Head of caudate nucleus (tissue), 42 donors: ENCODE measurements at regions of chr2 and their contacts with region 1.

Region 1: GRCh38 chr2:64523666-64524603 is at the start of gene AFTPH:
- DNase-seq: peak; percentile 96 to 99 (median 99)

Region 2: DNA sequence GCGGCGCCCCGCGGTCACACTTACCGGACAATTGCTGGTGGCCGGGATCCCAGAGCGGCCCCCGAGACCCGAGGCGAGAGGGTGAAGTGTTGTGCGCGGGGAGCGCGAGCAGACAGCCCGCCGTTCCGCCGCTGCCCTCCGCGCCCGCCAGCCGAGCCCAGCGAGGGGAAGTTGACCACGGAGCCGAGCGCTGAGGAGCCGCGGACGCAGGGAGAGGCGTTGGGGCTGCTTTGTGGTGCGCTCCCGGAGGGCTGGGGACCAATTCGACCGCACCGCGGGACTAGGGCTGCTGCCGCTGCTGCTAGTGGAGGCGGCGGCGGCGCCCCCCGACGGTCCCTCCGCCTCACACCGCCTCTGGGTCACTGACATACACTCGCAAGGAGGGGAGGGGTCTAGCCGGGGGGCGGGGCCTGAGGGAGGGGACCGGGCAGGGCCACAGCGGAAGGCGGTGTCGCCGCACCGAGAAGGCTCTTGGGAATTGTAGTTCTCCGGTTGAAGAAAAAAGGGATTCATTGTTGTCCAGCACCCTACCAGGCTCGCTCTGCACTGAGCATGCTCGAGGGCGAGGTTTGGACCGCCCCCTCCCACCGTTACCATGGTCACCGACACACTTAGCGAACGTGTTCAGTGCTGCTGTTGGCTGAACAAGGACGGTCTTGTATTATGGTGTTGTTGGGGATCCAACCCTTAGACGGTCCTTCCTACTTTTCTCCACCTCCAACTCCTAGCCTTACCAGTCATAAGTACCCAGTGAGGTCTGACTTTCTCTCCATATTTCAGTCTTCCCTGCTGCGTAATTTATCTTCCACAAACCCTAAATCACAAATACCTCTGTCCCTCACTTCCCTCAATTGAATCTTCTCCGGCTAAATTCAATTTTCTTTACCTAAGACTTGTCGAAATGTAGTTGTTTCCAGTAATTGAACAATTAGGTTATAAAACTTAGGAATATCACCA is 379.6 kb before region 1 on chr2 and contains the start of gene PELI1:
- intact Hi-C with region 1: loop called (anchors 10 kb)
- DNase-seq: peak; percentile 95 to 100 (median 99)

Region 3: DNA sequence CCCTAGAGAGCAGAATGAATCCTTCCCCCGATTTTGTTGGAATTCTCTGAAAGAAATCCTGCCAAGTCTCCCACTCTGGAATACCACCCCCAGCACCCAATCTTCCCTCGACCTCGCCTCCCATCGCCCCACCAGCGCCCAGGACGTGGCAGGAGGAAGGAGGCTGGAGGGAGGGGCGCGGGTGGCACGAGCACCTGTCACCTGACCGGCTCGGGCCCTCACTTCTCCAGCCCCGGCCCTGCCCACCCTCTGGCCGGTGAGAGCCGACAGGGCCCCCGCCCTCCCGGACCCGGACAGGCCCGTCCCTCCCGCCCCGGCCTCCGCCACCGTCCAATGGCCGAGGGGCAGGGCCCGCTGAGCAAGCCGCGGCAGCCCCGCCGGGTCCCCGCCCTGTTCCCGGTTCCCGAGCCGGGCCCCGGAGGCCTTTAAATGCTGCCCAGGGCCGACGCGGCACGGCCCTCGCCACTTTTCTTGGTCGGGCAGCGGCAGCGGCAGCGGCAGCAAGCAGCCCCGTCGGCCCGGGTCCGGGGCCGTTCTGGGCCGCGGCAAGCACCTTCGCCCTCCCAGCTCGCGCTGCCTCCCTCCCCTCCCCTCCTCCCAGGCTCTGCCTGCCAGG is 70.1 kb before region 1 on chr2 and contains the start of gene LGALSL:
- intact Hi-C with region 1: loop called (anchors 5 kb)
- DNase-seq: peak in 40 of 42 donors; percentile 12 to 79 (median 58)

Region 4: DNA sequence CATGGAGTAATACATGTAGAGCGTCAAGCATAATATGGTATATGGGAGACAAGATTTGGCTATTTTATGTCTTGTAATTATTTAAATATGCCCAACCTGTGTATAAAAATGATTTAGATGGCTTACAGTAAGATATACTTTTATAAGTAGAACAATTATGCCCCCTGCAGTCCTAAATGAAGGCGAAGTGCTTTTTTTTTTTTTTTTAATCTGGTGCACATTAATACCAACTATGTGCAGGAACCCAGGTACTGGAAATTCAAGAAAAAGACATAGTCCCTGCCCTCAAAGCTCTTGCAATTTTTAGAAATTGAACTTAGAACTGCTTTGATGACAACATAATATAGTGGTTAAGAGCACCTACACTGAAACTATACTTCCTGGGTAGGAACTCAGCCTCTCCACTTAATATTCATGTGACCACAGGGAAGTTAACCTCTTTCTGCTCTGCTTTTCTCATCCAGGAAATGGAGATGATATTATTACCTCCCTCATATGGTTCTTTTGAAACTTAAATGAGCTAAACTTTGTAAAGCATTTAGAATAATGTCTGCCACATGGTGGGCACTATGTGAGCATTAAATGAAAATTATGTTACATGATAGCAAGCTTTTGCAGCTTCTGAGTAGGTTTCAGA is 38.3 kb after region 1 on chr2:
- intact Hi-C with region 1: loop called (anchors 5 kb)
- DNase-seq: no peak

Region 5: DNA sequence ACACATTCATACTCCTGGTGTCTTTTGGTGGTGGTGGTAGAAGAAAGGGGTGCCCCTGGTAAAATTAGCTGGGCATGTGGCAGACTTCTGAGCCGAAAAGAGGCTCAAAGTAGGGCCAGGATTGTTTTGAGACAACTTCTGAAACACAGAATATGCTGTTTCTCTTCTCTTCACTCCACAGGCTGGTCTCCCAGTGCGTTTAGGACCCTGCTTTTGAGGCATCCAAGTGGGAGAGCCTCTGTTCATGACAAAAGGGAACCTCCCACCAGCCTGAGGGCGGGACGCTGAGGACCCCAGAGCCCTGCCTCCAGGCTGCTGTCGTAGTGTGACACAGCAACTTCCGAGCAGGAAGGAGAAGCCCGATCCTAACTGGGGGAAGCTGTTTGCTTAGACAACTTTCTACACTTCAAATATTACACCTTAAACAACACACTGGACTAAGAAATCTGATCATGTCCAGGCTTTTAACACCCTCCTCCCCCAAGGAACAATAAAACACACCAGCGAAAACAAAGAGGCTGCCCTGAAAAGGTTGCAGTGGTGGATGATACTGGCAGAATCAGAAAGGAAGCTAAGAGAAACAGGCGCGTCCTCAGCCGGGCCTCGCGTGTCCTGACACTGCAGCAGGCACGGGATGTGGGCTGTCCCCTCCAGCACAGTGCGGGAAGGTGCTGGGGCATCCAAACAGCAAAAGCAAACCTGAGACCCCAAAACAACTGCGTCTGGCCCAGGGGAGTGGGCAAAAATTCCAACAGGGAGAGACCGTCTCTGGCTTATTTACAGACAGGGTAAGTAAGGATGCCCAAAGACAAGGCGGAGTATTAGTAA is 120.5 kb after region 1 on chr2:
- intact Hi-C with region 1: loop called (anchors 10 kb)
- DNase-seq: peak in 36 of 42 donors; percentile 30 to 76 (median 58)

Region 6: GRCh38 chr2:64767670-64768468 is 243.9 kb after region 1 on chr2:
- intact Hi-C with region 1: loop called (anchors 10 kb)
- DNase-seq: peak; percentile 77 to 96 (median 89)

Region 7: GRCh38 chr2:64873472-64873924 is 349.6 kb after region 1 on chr2:
- intact Hi-C with region 1: loop called (anchors 5 kb)
- DNase-seq: peak; percentile 70 to 95 (median 86)